Activated T-helper 2 cell treated with anti-CD3 and anti-CD28 coated beads, Interferon-gamma antibody, Interleukin-2, Interleukin-4, amounts not matched to agents 10 μg/mL and 5 μg/mL and 100 μg/mL, durations not matched to agents 14 hours and 24 hours and 36 hours (primary cell): ENCODE measurements at regions of chr10 and their contacts with region 1.

Region 1: DNA sequence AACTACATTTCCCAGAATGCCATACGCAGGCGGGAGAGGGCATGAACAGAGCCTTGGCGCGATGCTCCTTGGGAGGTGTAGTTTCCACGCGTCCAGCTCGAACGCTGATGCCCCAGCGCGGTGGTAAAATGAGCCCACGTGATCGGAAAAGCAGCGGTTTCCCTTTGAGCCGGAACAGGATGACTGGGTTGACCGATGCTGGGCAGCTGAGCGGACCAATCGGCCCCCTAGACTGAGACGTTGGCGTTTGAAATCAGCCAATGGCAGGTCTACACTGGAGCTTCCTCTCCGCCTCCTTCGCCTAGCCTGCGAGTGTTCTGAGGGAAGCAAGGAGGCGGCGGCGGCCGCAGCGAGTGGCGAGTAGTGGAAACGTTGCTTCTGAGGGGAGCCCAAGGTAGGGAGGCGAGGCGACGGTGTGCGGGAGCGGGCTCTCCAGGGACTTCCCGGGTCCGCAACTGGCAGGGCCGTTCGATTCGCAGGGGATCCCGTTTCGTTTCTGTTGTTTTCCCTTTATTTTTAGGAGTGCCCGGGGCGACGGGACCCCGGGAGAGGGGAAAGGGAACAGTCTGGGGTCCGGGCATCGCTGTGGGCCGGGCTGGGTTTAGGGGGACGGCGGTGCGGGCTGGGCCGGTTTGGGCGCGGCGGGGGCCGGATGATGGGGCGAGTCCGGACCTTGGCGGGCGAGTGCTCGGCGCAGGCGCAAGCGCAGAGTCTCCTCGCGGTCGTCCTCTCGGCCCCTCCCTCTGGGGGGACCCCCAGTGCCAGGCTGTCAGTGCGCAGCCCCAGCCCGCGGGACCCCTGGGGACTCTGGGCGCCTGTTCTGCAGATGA is at the start of gene BUB3:
- DNase-seq: peak; percentile 96
- H3K4me3 Mint-ChIP-seq: peak within 1 kb of the TSS; percentile 99
- H3K27ac Mint-ChIP-seq: peak within 1 kb of the TSS; percentile 100
- H3K4me1 Mint-ChIP-seq: peaks cover 54% of the 10 kb centered on the region
- H3K27me3 Mint-ChIP-seq: peaks cover 22% of the 10 kb centered on the region
- total RNA-seq, gene BUB3: 194 and 210 TPM in 2 replicates

Region 2: GRCh38 chr10:122374237-122374869 is 780.0 kb before region 1 on chr10 and contains the start of gene PLEKHA1:
- intact Hi-C with region 1: loop called (anchors 2 kb)
- DNase-seq: peak; percentile 88
- H3K4me3 Mint-ChIP-seq: peak within 1 kb of the TSS; percentile 87
- H3K27ac Mint-ChIP-seq: peak within 1 kb of the TSS; percentile 91
- H3K4me1 Mint-ChIP-seq: peaks cover 27% of the 10 kb centered on the region
- H3K27me3 Mint-ChIP-seq: peaks cover 57% of the 10 kb centered on the region
- total RNA-seq, gene PLEKHA1: 4.5 and 5.1 TPM in 2 replicates

Region 3: DNA sequence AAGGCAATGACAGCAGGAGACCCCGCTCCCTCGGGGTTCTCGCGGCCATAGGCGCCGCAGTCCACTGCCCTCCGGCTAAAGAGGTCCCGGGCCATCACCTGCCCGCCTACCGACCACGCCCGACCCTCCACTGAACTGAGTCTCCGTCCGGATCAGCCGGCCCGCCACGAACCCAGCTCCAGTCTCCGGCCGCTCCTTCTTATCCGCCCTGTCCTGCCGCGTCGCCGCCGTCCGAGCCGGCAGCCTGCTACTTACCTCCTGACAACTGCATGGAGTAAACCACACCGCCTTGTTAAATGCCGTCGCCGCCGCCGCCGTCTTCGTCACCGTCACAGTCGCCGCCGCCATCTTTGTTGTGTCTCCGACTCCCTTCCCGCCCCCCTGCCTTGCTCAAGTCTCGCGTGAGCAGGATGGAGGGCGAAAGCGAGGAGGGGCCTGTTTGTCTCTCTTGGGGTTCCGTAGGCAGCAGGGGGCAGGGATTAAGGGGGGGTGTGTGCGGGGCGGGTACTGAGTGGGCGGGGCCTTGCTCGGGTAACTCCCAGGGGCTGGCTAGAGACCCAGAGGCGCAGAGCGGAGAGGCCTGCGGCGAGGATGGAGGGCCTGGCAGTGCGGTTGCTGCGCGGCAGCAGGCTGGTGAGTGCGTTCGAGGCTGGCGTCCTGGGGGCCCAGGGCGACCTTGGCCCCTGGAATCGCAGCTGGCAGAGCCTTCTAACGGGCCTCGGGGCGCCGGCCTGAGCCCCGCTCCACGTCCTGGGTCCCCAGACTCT is 145.7 kb before region 1 on chr10 and contains the starts of genes ACADSB and IKZF5:
- intact Hi-C with region 1: loop called (anchors 1 kb)
- DNase-seq: peak; percentile 94
- H3K4me3 Mint-ChIP-seq: peak within 1 kb of the TSS; percentile 98
- H3K27ac Mint-ChIP-seq: peak within 1 kb of the TSS; percentile 99
- H3K4me1 Mint-ChIP-seq: peaks cover 35% of the 10 kb centered on the region
- H3K27me3 Mint-ChIP-seq: no peaks in the 10 kb centered on the region
- total RNA-seq, gene ACADSB: 21.4 and 23.3 TPM in 2 replicates
- total RNA-seq, gene IKZF5: 15.0 and 16.1 TPM in 2 replicates

Region 4: GRCh38 chr10:124231168-124232155 is 1077.2 kb after region 1 on chr10:
- intact Hi-C with region 1: loop called (anchors 5 kb)
- DNase-seq: peak; percentile 66
- H3K4me3 Mint-ChIP-seq: no peak overlapping the region
- H3K27ac Mint-ChIP-seq: no peak overlapping the region
- H3K4me1 Mint-ChIP-seq: no peaks in the 10 kb centered on the region
- H3K27me3 Mint-ChIP-seq: no peaks in the 10 kb centered on the region

Region 5: DNA sequence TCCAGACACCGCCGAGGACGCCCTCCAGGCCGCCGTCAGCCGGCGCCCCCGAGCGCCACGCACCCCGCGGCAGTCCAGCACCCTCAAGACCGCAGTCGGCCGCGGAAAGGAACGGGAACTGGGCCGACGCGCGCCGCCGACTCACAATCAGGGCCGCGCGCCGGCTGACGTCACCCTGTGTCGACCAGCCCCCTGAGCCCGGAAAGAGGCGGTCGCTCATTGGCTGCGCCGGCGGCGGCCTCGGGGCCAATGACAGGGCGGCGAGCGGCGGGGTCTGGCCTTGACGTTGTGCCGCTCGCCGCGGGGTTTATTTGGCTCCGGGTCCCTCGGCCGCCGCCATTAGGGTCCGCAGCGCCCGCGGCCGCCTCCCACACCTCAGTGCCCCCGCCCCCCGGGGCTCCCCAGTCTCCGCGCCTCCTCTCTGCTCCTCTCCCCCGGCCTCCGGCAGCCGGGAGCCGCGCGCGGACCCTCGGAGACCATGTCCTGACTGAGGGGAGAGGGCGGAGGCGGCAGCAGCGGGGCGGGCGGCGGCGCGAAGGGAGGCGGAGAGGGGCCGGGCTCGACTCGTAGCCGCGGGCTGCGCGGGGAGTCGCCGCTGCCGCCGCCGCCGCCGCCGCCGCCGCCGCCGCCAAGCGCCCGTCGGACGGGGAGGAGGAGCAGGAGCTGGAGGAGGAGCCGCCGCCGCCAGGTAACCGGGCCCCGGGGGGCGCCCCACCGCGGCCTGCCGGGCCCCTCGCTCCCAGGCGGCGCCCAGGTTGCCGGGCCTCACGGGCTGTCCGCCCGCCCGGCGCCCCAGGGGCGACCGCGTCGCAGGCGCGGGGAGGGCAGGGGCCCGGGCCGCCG is 1762.5 kb after region 1 on chr10:
- intact Hi-C with region 1: loop called (anchors 5 kb)
- DNase-seq: peak; percentile 94
- H3K4me3 Mint-ChIP-seq: peak overlapping the region; percentile 84
- H3K27ac Mint-ChIP-seq: peak overlapping the region; percentile 85
- H3K4me1 Mint-ChIP-seq: peaks cover 37% of the 10 kb centered on the region
- H3K27me3 Mint-ChIP-seq: peaks cover 7% of the 10 kb centered on the region